MCF 10A (cell line): ENCODE measurements at regions of chr18 and their contacts with region 1.

Region 1: DNA sequence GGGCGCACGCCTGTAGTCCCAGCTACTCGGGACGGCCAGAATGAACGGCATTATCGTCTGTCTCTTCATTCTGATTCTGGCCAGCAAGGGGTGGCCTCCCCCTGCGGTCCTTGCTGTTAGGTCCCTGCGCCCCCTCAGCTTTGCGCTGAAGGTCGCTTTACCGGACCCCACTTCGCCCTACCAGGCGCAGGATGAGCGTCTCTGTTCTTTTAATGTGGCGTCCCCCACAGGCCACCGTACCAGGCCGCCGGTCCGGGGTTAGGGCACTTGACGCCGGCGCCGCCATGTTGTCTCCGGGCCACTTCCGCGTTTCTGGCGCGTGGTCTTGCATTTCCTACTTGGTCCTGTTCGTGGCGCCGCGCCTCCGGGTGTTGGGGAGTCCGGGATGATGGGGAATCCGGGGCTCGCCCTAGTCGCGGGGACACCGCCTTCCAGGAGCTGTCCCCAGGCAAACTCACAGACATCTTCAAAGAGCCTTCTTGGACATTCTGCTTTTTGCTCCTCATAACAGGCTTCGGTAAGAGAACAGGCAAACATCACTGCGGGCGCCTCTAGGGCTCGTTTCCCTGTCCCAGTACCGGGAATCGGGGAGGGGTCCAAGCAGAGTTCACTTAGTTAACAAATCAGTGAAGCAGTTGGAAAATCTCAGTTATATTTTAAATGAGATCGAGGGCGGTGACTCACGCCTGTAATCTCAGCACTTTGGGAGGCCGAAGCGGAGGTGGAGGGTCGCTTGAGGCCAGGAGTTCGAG is 8.5 kb upstream of the NARS1 start:
- DNase-seq: peak; percentile 97
- H3K4me3 Mint-ChIP-seq: peak overlapping the region; percentile 84
- H3K27ac Mint-ChIP-seq: peak overlapping the region; percentile 97
- H3K4me1 Mint-ChIP-seq: peaks cover 6% of the 10 kb centered on the region
- H3K27me3 Mint-ChIP-seq: no peaks in the 10 kb centered on the region
- CTCF ChIP-seq: peak; percentile 76

Region 2: GRCh38 chr18:57062844-57063243 is 567.3 kb before region 1 on chr18:
- CTCF ChIA-PET with region 1: no interaction called
- POLR2A ChIA-PET with region 1: no interaction called
- intact Hi-C with region 1: no loop called
- DNase-seq: no peak
- H3K4me3 Mint-ChIP-seq: no peak overlapping the region
- H3K27ac Mint-ChIP-seq: no peak overlapping the region
- H3K4me1 Mint-ChIP-seq: no peaks in the 10 kb centered on the region
- H3K27me3 Mint-ChIP-seq: no peaks in the 10 kb centered on the region
- CTCF ChIP-seq: no peak

Region 3: DNA sequence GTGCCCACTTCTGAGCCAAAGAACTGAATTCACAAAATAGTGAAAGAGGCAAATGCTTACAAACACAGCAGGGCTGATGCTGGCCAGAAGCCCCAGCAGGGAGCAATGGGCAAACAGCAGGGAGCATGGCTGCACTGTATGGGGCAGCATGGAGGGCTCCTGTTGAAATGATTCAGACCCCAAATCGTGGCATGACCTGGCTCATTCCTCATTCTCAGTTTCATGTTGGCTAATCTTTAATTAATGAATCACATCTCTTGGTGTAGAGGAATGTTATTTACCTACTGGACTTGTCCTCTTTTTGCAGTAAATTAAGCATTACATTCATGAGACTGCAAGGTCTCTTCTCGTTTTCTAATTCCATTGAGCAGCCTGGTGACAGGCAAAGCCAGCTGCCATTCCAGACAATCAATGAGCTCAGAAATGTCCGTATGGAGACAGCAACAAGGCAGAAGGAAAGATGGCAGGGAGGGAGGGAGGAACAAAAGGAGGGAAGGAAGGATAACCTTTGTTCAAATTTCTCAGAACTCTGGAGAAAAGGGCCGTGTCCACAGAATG is 362.7 kb before region 1 on chr18:
- CTCF ChIA-PET with region 1: no interaction called
- POLR2A ChIA-PET with region 1: no interaction called
- intact Hi-C with region 1: no loop called
- DNase-seq: no peak
- H3K4me3 Mint-ChIP-seq: no peak overlapping the region
- H3K27ac Mint-ChIP-seq: no peak overlapping the region
- H3K4me1 Mint-ChIP-seq: no peaks in the 10 kb centered on the region
- H3K27me3 Mint-ChIP-seq: peaks cover 51% of the 10 kb centered on the region
- CTCF ChIP-seq: no peak

Region 4: DNA sequence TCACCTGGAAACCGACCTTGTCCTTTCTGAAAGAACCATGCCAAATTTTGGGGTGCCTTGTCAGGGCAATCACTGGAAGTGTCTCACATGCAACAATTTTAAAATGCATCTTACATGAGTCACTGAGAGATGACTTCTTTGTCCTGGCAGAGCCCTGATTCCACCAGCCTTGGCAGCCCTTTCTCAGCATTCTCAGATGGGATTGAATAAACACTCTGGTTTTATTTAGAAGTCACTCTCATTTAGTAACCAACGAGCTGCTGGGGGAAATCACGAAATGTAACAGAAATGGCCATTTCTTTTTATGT is 176.8 kb after region 1 on chr18:
- CTCF ChIA-PET with region 1: interaction called, 4 read pairs
- POLR2A ChIA-PET with region 1: interaction called, 10 read pairs
- intact Hi-C with region 1: loop called (anchors 2 kb)
- DNase-seq: peak; percentile 71
- H3K4me3 Mint-ChIP-seq: peak overlapping the region; percentile 18
- H3K27ac Mint-ChIP-seq: peak overlapping the region; percentile 37
- H3K4me1 Mint-ChIP-seq: peaks cover 11% of the 10 kb centered on the region
- H3K27me3 Mint-ChIP-seq: no peaks in the 10 kb centered on the region
- CTCF ChIP-seq: no peak

Region 5: DNA sequence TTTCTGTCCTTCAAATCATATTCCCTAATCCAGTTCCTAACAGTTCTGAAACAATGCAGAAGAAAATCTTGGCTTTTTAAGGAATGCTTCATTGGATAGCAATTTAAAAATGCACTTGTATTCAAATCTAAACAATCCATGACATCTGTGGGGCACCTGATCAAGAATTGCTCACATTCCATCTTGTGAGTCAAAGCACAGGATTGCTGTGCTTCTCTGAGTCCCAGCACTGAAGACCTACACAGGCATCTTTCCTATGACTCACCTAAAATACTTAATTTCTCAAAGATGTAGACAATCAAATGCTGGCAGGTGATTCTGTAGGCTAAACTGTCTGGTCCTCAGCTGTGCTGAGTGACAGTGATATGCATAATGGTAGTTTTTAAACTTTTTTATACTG is 183.1 kb after region 1 on chr18:
- CTCF ChIA-PET with region 1: no interaction called
- POLR2A ChIA-PET with region 1: no interaction called
- intact Hi-C with region 1: loop called (anchors 2 kb)
- DNase-seq: peak; percentile 77
- H3K4me3 Mint-ChIP-seq: no peak overlapping the region
- H3K27ac Mint-ChIP-seq: peak overlapping the region; percentile 87
- H3K4me1 Mint-ChIP-seq: peaks cover 17% of the 10 kb centered on the region
- H3K27me3 Mint-ChIP-seq: no peaks in the 10 kb centered on the region
- CTCF ChIP-seq: no peak

Region 6: DNA sequence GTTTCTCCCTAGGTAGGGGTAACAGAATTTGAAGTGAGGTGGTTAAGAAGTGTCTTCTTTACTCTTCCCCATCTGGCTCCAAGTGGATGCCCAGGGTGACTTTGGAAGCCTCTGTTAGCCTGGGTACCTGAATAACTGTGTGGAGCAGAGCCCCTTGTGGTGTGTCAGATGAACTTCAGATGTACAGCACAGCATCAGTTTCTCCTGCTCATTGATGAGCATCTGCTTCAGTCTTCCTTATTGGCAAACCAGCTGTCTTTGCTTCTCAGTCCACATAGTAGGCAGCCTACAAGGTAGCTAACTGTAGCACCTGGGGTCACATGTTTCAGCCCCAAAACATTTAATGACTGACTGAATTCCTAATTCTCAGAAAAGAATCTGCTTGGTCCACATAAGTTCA is 229.1 kb after region 1 on chr18:
- CTCF ChIA-PET with region 1: interaction called, 3 read pairs
- POLR2A ChIA-PET with region 1: interaction called, 3 read pairs
- intact Hi-C with region 1: loop called (anchors 1 kb)
- DNase-seq: peak; percentile 56
- H3K4me3 Mint-ChIP-seq: no peak overlapping the region
- H3K27ac Mint-ChIP-seq: no peak overlapping the region
- H3K4me1 Mint-ChIP-seq: no peaks in the 10 kb centered on the region
- H3K27me3 Mint-ChIP-seq: no peaks in the 10 kb centered on the region
- CTCF ChIP-seq: peak; percentile 41

Region 7: DNA sequence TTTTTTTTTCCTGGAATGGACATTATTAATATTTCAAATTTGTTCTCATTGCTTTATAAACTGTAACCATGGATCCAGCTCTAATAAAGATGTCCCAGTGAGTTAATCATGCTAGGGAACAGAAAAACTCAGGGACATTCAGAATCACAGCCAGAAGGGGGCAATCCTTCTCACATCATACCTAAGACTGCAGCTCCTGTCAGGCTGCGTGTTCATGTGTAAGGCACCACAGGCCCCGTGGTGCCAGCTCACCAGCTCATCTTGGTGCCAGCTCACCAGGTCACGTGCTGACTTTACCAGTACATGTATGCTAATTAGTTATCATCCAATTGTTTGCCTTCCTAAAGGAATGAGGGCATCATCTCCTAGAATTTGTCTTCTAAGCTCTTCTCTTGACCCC is 329.1 kb after region 1 on chr18:
- CTCF ChIA-PET with region 1: no interaction called
- POLR2A ChIA-PET with region 1: no interaction called
- intact Hi-C with region 1: loop called (anchors 5 kb)
- DNase-seq: peak; percentile 84
- H3K4me3 Mint-ChIP-seq: no peak overlapping the region
- H3K27ac Mint-ChIP-seq: no peak overlapping the region
- H3K4me1 Mint-ChIP-seq: peaks cover 6% of the 10 kb centered on the region
- H3K27me3 Mint-ChIP-seq: no peaks in the 10 kb centered on the region
- CTCF ChIP-seq: peak; percentile 53

Region 8: GRCh38 chr18:58128381-58129374 is 498.5 kb after region 1 on chr18:
- CTCF ChIA-PET with region 1: no interaction called
- POLR2A ChIA-PET with region 1: no interaction called
- intact Hi-C with region 1: loop called (anchors 5 kb)
- DNase-seq: no peak
- H3K4me3 Mint-ChIP-seq: no peak overlapping the region
- H3K27ac Mint-ChIP-seq: no peak overlapping the region
- H3K4me1 Mint-ChIP-seq: no peaks in the 10 kb centered on the region
- H3K27me3 Mint-ChIP-seq: no peaks in the 10 kb centered on the region
- CTCF ChIP-seq: no peak